Transverse colon (tissue), 4 donors: ENCODE measurements at regions of chr3 and their contacts with region 1.

Region 1: GRCh38 chr3:196969660-196970546 is 1.3 kb upstream of the PIGZ start:
- DNase-seq: peak; percentile 70
- H3K4me3 ChIP-seq: peak overlapping the region; percentile 72 to 94 (median 81)
- H3K27ac ChIP-seq: peak overlapping the region; percentile 84 to 93 (median 89)
- H3K4me1 ChIP-seq: peaks cover 7 to 38% (median 19%) of the 10 kb centered on the region in 4 donors
- H3K27me3 ChIP-seq: no peaks in the 10 kb centered on the region
- CTCF ChIP-seq: peak; percentile 32 to 89 (median 81)
- EP300 ChIP-seq: no peak
- POLR2A ChIP-seq: no peak

Region 2: DNA sequence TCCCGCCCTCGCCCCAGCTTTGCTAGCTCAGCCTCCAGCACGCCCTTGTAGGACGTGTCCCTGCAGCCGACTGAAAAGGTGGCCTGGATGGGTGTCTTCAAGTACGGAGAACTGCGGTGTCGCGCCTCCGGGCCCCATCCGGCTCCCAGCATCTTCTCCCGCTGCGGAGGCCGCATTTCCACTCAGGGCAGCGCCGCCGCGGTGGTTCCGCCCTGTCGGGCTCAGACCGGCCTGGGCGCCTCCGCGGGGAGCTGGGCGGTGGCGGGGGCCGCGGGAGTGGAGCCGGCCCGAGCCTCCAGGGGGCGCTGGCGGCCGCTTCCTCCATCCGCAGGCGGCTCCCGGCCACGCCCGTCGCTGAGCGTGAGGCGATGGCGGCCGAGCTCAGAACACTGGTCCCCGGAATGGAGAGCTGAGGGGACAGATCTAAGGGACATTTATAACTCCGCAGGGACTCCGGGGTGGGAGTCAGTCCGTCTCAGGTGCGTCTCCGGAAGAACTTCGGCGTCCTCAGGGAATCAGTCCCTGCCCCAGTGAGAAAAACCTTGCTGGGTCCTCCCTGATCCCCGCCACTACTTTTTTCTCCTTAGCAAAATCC is 441.2 kb before region 1 on chr3:
- in situ Hi-C with region 1: no loop called
- intact Hi-C with region 1: no loop called
- DNase-seq: peak; percentile 79
- H3K4me3 ChIP-seq: peak overlapping the region; percentile 10 to 46 (median 23)
- H3K27ac ChIP-seq: peak overlapping the region; percentile 13 to 68 (median 38)
- H3K4me1 ChIP-seq: peaks cover 0 to 4% (median 0%) of the 10 kb centered on the region in 4 donors
- H3K27me3 ChIP-seq: no peaks in the 10 kb centered on the region
- CTCF ChIP-seq: peak; percentile 31 to 77 (median 67)
- EP300 ChIP-seq: no peak
- POLR2A ChIP-seq: no peak

Region 3: DNA sequence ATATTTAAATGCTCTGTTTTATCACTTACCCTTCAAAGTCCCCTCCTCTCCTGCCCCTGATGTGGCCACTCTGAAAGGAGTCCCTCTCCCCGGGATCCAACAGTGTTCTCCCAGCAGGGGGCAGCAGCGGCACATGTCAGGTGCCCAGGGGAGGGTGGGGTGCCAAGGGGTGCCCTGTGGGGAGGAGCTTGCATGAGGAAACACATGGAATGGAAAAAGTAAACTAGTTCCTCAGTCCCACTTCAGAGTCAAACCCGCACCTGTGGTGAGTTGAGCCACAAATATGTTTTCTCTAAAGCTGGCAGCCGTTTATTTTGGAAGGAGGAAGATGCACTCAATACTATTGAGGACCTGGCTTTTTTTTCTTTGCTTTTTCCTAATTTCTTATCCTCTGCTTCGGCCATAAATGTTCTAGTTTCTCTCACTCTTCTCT is 360.5 kb before region 1 on chr3:
- in situ Hi-C with region 1: loop called in 1 of 4 experiments (anchors 25 kb)
- intact Hi-C with region 1: no loop called
- DNase-seq: peak; percentile 95
- H3K4me3 ChIP-seq: no peak overlapping the region
- H3K27ac ChIP-seq: peak overlapping the region in 3 of 4 donors; percentile 26 to 48 (median 27)
- H3K4me1 ChIP-seq: peaks cover 0 to 27% (median 6%) of the 10 kb centered on the region in 4 donors
- H3K27me3 ChIP-seq: peaks cover 6% of the 10 kb centered on the region
- CTCF ChIP-seq: peak; percentile 90 to 92 (median 91)
- EP300 ChIP-seq: no peak
- POLR2A ChIP-seq: no peak

Region 4: GRCh38 chr3:196837819-196838420 is 132.0 kb before region 1 on chr3:
- in situ Hi-C with region 1: loop called in 2 of 4 experiments (anchors 10 to 25 kb)
- intact Hi-C with region 1: no loop called
- DNase-seq: peak; percentile 75
- H3K4me3 ChIP-seq: no peak overlapping the region
- H3K27ac ChIP-seq: no peak overlapping the region
- H3K4me1 ChIP-seq: no peaks in the 10 kb centered on the region
- H3K27me3 ChIP-seq: no peaks in the 10 kb centered on the region
- CTCF ChIP-seq: peak; percentile 59 to 76 (median 70)
- EP300 ChIP-seq: no peak
- POLR2A ChIP-seq: no peak

Region 5: DNA sequence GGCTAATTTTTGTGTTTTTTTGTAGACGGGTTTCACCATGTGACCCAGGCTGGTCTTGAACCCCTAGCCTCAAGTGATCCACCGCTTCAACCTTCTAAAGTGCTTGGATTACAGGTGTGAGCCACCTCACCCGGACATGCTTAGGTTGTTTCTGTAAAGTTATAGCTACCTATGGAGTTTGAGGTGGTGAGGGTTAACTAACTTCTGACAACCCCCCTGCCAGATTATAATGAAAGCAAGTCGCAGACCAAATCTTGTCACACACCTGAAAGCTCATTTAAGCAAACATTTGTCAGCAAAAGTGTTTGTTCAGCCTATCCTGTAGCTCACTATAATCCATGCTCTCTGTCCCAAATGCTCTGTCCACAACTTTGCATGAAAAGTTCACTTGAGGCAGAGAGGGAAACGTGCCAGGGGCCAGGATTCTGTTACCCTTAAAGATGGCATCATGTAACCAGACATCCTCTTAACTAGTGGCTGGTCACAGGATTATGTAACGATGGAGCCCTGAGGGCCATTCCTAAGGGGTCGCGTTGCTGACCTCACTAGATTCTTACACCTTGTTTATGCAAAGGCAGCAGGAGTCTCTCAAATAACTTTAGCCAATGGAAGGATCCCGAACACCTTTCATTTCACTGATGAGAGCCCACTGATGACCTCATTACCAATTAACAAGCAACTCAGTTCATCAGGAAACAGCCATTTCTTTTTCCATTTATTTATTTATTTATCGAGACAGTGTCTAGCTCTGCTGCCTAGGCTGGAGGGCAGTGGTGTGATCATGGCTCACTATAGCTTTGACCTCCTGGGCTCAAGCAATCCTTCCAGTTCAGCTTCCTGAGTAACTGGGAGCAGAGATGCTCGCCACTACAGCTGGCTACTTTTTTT is 126.2 kb before region 1 on chr3:
- in situ Hi-C with region 1: loop called in 2 of 4 experiments (anchors 10 to 25 kb)
- intact Hi-C with region 1: loop called (anchors 2 kb)
- DNase-seq: no peak
- H3K4me3 ChIP-seq: no peak overlapping the region
- H3K27ac ChIP-seq: no peak overlapping the region
- H3K4me1 ChIP-seq: no peaks in the 10 kb centered on the region
- H3K27me3 ChIP-seq: no peaks in the 10 kb centered on the region
- CTCF ChIP-seq: no peak
- EP300 ChIP-seq: no peak
- POLR2A ChIP-seq: no peak

Region 6: GRCh38 chr3:197599089-197599765 is 629.3 kb after region 1 on chr3:
- in situ Hi-C with region 1: no loop called
- intact Hi-C with region 1: no loop called
- DNase-seq: peak; percentile 81
- H3K4me3 ChIP-seq: no peak overlapping the region
- H3K27ac ChIP-seq: peak overlapping the region; percentile 41 to 82 (median 73)
- H3K4me1 ChIP-seq: peaks cover 5 to 43% (median 27%) of the 10 kb centered on the region in 4 donors
- H3K27me3 ChIP-seq: no peaks in the 10 kb centered on the region
- CTCF ChIP-seq: peak; percentile 86 to 92 (median 91)
- EP300 ChIP-seq: no peak
- POLR2A ChIP-seq: no peak